B cell (primary cell): ENCODE measurements at regions of chr19 and their contacts with region 1.

Region 1: GRCh38 chr19:13784731-13785452 is 10.4 kb upstream of the ZSWIM4 start:
- DNase-seq: peak; percentile 76
- ATAC-seq: peak; percentile 71
- H3K4me3 ChIP-seq: no peak overlapping the region
- H3K4me3 Mint-ChIP-seq: peak overlapping the region; percentile 62
- H3K27ac ChIP-seq: no peak overlapping the region
- H3K27ac Mint-ChIP-seq: peak overlapping the region; percentile 42
- H3K4me1 ChIP-seq: peaks cover 33 to 53% of the 10 kb centered on the region in 2 donors
- H3K4me1 Mint-ChIP-seq: peaks cover 37% of the 10 kb centered on the region
- H3K27me3 ChIP-seq: no peaks in the 10 kb centered on the region
- H3K27me3 Mint-ChIP-seq: no peaks in the 10 kb centered on the region
- CTCF ChIP-seq: peak; percentile 78

Region 2: DNA sequence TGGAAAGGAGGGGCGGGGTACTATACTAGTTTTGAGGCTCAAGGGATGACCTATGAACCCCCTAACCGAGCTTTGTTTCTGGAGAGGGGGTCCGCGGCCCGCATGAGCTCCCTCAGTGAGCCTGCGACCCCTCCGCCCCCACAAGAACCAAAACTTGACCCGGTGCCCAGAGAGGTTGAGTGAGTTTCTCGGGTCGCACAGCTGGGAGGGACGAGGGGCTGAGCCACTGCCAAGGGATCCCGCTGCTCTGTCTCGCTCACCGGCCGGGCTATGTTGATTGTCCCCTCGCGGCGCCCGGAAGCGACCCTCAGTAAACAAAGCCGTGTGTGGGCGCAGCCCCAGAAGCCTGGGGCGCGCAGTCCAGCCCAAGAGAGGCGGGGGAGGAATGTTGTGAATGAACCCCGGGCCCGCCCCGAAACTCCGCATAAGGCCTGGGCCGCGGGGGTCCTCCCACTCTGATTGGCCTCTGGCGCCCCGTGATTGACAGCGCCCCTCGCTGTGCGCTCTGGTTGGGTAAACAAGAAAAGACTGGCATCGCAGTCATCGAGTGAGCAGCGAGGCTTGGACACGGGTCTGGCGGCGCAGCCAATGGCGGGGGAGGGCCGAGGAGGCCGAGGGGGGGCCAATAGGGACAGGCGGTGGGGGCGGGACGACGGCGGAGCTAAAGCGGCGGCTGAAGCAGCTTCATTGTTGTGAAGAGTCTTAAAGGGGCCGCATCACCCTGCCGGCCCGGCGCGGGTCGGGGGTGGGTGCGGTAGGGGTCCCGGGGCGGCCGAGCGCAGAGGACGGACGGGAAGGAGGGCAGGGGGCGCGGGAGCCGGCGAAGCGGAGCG is 10.1 kb after region 1 on chr19 and contains the start of gene ZSWIM4:
- CTCF ChIA-PET with region 1: interaction called, 11 read pairs
- POLR2A ChIA-PET with region 1: interaction called, 4 read pairs
- intact Hi-C with region 1: no loop called
- DNase-seq: peak; percentile 97
- ATAC-seq: peak; percentile 95
- H3K4me3 ChIP-seq: peak within 1 kb of the TSS; percentile 44 to 81 (median 68)
- H3K4me3 Mint-ChIP-seq: peak within 1 kb of the TSS; percentile 98
- H3K27ac ChIP-seq: peak within 1 kb of the TSS; percentile 58 to 82
- H3K27ac Mint-ChIP-seq: peak within 1 kb of the TSS; percentile 95
- H3K4me1 ChIP-seq: peaks cover 21 to 26% of the 10 kb centered on the region in 2 donors
- H3K4me1 Mint-ChIP-seq: peaks cover 36% of the 10 kb centered on the region
- H3K27me3 ChIP-seq: no peaks in the 10 kb centered on the region
- H3K27me3 Mint-ChIP-seq: no peaks in the 10 kb centered on the region
- CTCF ChIP-seq: no peak
- total RNA-seq, gene ZSWIM4: 10.1 and 10.6 TPM in 2 replicates

Region 3: GRCh38 chr19:13804830-13805683 is 20.2 kb after region 1 on chr19:
- CTCF ChIA-PET with region 1: interaction called, 3 read pairs
- POLR2A ChIA-PET with region 1: interaction called, 10 read pairs
- intact Hi-C with region 1: no loop called
- DNase-seq: peak; percentile 33
- ATAC-seq: no peak
- H3K4me3 ChIP-seq: no peak overlapping the region
- H3K4me3 Mint-ChIP-seq: no peak overlapping the region
- H3K27ac ChIP-seq: no peak overlapping the region
- H3K27ac Mint-ChIP-seq: no peak overlapping the region
- H3K4me1 ChIP-seq: no peaks in the 10 kb centered on the region
- H3K4me1 Mint-ChIP-seq: no peaks in the 10 kb centered on the region
- H3K27me3 ChIP-seq: no peaks in the 10 kb centered on the region
- H3K27me3 Mint-ChIP-seq: no peaks in the 10 kb centered on the region
- CTCF ChIP-seq: no peak

Region 4: GRCh38 chr19:13833330-13834243 is 48.7 kb after region 1 on chr19:
- CTCF ChIA-PET with region 1: interaction called, 9 read pairs
- POLR2A ChIA-PET with region 1: interaction called, 16 read pairs
- intact Hi-C with region 1: no loop called
- DNase-seq: peak; percentile 96
- ATAC-seq: peak; percentile 87
- H3K4me3 ChIP-seq: peak overlapping the region; percentile 28 to 77 (median 69)
- H3K4me3 Mint-ChIP-seq: peak overlapping the region; percentile 88
- H3K27ac ChIP-seq: peak overlapping the region; percentile 58 to 81
- H3K27ac Mint-ChIP-seq: peak overlapping the region; percentile 86
- H3K4me1 ChIP-seq: peaks cover 39 to 45% of the 10 kb centered on the region in 2 donors
- H3K4me1 Mint-ChIP-seq: peaks cover 38% of the 10 kb centered on the region
- H3K27me3 ChIP-seq: no peaks in the 10 kb centered on the region
- H3K27me3 Mint-ChIP-seq: no peaks in the 10 kb centered on the region
- CTCF ChIP-seq: peak; percentile 73

Region 5: GRCh38 chr19:13839130-13839937 is 54.4 kb after region 1 on chr19:
- CTCF ChIA-PET with region 1: interaction called, 9 read pairs
- POLR2A ChIA-PET with region 1: interaction called, 16 read pairs
- intact Hi-C with region 1: no loop called
- DNase-seq: peak; percentile 82
- ATAC-seq: peak; percentile 44
- H3K4me3 ChIP-seq: peak overlapping the region; percentile 1 to 75 (median 62)
- H3K4me3 Mint-ChIP-seq: peak overlapping the region; percentile 88
- H3K27ac ChIP-seq: peak overlapping the region; percentile 93 to 94
- H3K27ac Mint-ChIP-seq: peak overlapping the region; percentile 95
- H3K4me1 ChIP-seq: peaks cover 76 to 83% of the 10 kb centered on the region in 2 donors
- H3K4me1 Mint-ChIP-seq: peaks cover 66% of the 10 kb centered on the region
- H3K27me3 ChIP-seq: no peaks in the 10 kb centered on the region
- H3K27me3 Mint-ChIP-seq: no peaks in the 10 kb centered on the region
- CTCF ChIP-seq: no peak